ENCODE measurements at regions of chr7 and their contacts with region 1.

Region 1: DNA sequence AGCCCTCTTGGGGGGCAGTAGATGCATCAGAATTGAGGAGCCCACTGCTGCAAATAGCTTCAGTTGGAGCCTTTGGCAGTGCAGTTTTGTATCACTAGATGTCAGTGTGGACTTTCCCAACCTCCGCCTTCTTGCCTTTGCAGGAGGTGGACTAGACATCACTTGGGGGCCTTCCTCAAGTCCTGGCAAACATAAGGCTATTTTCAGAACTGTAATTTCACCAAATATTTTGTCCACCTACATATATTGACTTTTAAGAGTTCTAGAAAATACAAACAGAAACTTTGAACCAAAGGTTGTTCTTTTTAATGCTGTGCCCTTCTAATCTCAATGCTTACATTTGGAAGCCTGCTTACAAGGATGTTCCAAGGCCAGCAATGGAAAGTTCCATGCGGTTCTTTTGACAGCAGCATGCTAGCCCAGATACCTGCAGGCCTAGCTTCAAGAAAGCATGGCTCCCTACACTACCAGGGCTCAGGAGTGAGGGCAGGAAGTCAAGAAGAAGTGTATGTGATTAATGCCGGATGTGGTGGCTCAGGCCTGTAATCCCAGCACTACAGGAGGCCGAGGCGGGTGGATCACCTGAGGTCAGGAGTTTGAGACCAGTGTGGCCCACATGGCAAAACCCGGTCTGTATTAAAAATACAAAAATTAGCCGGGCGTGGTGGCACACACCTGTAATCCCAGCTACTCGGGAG is 8.0 kb upstream of the ZNRF2 start:
- DNase-seq: no peak
- ATAC-seq: peak; percentile 60 to 64
- H3K4me3 ChIP-seq: no peak overlapping the region
- H3K27ac ChIP-seq: no peak overlapping the region
- H3K4me1 ChIP-seq: no peaks in the 10 kb centered on the region
- H3K27me3 ChIP-seq: no peaks in the 10 kb centered on the region

Region 2: DNA sequence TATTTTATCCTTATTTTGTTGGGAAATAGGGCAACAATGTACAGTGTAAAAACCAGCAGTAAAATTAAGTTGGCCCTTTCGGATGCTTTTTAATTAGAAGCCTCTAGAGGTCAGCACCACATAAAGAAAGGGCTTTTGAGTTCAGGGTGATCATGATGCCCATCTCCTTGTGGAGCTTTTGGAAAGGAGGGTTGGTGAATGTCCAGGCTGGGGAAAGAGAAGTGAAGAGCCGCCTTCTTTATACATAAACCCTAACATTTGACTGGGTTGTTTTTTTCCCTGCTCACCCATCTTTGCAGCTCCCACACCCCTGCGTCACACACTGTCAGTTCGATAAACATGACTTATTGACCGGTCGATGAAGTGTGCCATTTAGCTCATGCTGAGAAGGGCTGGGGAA is 111.8 kb before region 1 on chr7:
- intact Hi-C with region 1: loop called in 2 of 4 experiments (anchors 10 kb)
- DNase-seq: no peak
- ATAC-seq: peak; percentile 58 to 65
- H3K4me3 ChIP-seq: no peak overlapping the region
- H3K27ac ChIP-seq: no peak overlapping the region
- H3K4me1 ChIP-seq: peaks cover 2% of the 10 kb centered on the region
- H3K27me3 ChIP-seq: no peaks in the 10 kb centered on the region

Region 3: GRCh38 chr7:30412810-30413504 is 136.6 kb after region 1 on chr7:
- intact Hi-C with region 1: loop called in 1 of 4 experiments (anchors 10 kb)
- DNase-seq: no peak
- ATAC-seq: peak; percentile 91 to 94
- H3K4me3 ChIP-seq: no peak overlapping the region
- H3K27ac ChIP-seq: no peak overlapping the region
- H3K4me1 ChIP-seq: no peaks in the 10 kb centered on the region
- H3K27me3 ChIP-seq: no peaks in the 10 kb centered on the region

Region 4: GRCh38 chr7:30422922-30423321 is 146.6 kb after region 1 on chr7:
- intact Hi-C with region 1: loop called in 2 of 4 experiments (anchors 10 kb)
- DNase-seq: no peak
- ATAC-seq: peak; percentile 21 to 67
- H3K4me3 ChIP-seq: no peak overlapping the region
- H3K27ac ChIP-seq: no peak overlapping the region
- H3K4me1 ChIP-seq: no peaks in the 10 kb centered on the region
- H3K27me3 ChIP-seq: no peaks in the 10 kb centered on the region

Region 5: GRCh38 chr7:30556840-30557239 is 280.5 kb after region 1 on chr7:
- intact Hi-C with region 1: loop called in 3 of 4 experiments (anchors 10 kb)
- DNase-seq: no peak
- ATAC-seq: no peak
- H3K4me3 ChIP-seq: no peak overlapping the region
- H3K27ac ChIP-seq: no peak overlapping the region
- H3K4me1 ChIP-seq: no peaks in the 10 kb centered on the region
- H3K27me3 ChIP-seq: no peaks in the 10 kb centered on the region

Region 6: GRCh38 chr7:30564243-30564892 is 288.0 kb after region 1 on chr7:
- intact Hi-C with region 1: loop called in 3 of 4 experiments (anchors 10 kb)
- DNase-seq: peak; percentile 81 to 89 (median 83)
- ATAC-seq: peak; percentile 91 to 93
- H3K4me3 ChIP-seq: no peak overlapping the region
- H3K27ac ChIP-seq: no peak overlapping the region
- H3K4me1 ChIP-seq: peaks cover 6% of the 10 kb centered on the region
- H3K27me3 ChIP-seq: no peaks in the 10 kb centered on the region